Naive thymus-derived CD4-positive, alpha-beta T cell (primary cell): ENCODE measurements at regions of chr4 and their contacts with region 1.

Region 1: DNA sequence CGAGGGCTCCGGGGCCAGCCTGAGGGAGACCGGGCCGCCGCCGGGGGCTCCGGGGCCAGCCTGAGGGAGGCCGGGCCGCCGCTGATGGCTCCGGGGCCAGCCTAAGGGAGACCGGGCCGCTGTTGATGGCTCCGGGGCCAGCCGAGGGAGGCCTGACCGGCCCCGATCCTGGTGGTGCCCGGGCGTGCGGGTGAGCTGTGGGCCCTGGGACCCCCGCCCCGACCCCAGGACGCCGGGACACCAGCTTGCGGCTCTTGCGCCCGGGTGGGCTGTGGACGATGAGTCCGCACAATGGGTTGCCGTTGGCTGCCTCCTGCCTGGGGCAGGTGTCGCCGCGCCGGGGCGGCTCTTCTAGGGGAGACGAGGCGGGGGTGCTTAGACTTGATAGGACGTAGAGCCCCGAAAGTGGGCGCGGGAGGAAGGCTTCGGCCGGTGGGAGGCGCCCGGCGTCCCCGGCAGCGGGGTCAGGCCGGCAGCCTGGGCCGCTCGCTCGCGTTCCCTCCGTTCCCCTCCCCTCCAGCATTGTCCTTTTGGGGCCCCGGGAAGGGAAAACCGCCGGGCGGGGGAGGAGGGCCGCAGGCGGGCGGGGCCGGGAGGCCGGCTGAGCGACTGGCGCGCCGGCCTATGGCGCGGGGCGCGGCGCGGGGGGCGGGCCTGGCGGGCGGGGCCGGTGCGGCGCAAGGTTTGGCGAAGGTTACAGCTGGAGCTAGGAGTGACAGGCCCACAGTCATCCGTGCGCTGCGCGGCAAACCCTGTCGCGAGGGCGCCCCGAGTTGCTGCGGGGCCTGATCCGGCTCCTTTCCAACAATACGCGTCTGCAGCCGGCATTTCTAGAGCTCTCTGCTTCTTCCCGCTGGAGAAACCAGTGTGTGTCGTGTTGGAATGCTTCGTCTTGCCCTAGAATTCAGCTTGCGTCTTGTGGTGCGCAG is 790 bp downstream of the KIAA0232 start:
- DNase-seq: peak; percentile 80 to 92 (median 87)
- ATAC-seq: peak; percentile 85
- H3K4me3 ChIP-seq: peak overlapping the region; percentile 85
- H3K4me3 Mint-ChIP-seq: peak overlapping the region; percentile 82 to 88 (median 86)
- H3K27ac ChIP-seq: peak overlapping the region; percentile 97
- H3K27ac Mint-ChIP-seq: peak overlapping the region; percentile 64 to 93 (median 84)
- H3K4me1 ChIP-seq: peaks cover 20 to 21% of the 10 kb centered on the region in 2 donors
- H3K4me1 Mint-ChIP-seq: peaks cover 39 to 75% (median 68%) of the 10 kb centered on the region in 7 donors
- H3K27me3 ChIP-seq: no peaks in the 10 kb centered on the region
- H3K27me3 Mint-ChIP-seq: no peaks in the 10 kb centered on the region

Region 2: GRCh38 chr4:6269616-6270511 is 513.5 kb before region 1 on chr4 and contains the start of gene WFS1:
- CTCF ChIA-PET with region 1: no interaction called
- POLR2A ChIA-PET with region 1: no interaction called
- intact Hi-C with region 1: loop called in 1 of 2 experiments (anchors 2 kb)
- DNase-seq: peak; percentile 91 to 97 (median 95)
- ATAC-seq: peak; percentile 100
- H3K4me3 ChIP-seq: peak within 1 kb of the TSS; percentile 82
- H3K4me3 Mint-ChIP-seq: peak within 1 kb of the TSS; percentile 85 to 92 (median 90)
- H3K27ac ChIP-seq: peak within 1 kb of the TSS; percentile 67
- H3K27ac Mint-ChIP-seq: peak within 1 kb of the TSS; percentile 24 to 84 (median 65)
- H3K4me1 ChIP-seq: peaks cover 8% of the 10 kb centered on the region in 2 donors
- H3K4me1 Mint-ChIP-seq: peaks cover 19 to 31% (median 25%) of the 10 kb centered on the region in 7 donors
- H3K27me3 ChIP-seq: no peaks in the 10 kb centered on the region
- H3K27me3 Mint-ChIP-seq: peaks cover 0 to 44% (median 3%) of the 10 kb centered on the region in 5 donors
- total RNA-seq, gene WFS1: 2.8 to 6.7 (median 4.4) TPM

Region 3: DNA sequence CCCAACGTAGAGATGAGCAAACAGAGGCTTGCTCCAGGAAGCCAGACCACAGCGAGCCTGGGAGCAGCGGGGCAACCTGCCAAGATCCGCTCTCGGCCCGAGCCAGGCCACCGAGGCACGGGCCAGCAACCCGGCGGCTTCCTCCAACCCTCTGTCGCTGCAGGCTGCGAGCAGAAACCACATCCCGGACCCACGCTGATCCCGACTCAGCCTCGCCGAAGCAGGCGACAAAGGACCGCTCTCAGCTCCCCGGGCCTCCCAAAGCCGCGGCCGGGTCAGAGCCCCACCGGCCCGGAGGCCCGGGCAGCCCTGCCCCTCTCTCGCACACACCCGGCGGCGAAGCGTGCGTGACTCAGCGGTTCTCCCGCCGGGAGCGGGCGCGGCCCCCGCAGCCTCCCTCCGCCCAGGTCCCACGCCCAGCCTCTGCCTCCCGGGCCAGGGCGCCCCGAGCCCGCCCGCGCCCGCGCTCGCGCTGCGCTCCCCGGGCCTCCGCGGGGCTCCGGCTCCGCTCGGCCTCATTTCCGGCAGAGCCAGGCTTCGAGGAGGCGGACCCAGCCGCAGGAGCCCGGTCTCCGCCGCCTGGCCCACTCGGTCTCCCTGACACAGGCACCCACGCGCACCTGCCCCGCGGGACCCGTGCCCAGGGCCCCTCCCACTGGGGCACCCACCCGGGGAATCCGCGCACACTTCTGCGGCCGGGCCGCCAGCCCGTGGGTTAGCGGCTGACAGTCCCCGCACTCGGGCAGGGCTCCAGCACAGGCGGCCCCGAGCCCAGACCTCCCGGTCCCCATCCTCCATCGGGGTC is 312.6 kb before region 1 on chr4:
- CTCF ChIA-PET with region 1: no interaction called
- POLR2A ChIA-PET with region 1: no interaction called
- intact Hi-C with region 1: no loop called
- DNase-seq: no peak
- ATAC-seq: no peak
- H3K4me3 ChIP-seq: no peak overlapping the region
- H3K4me3 Mint-ChIP-seq: peak overlapping the region in 8 of 10 donors; percentile 21 to 75 (median 52)
- H3K27ac ChIP-seq: no peak overlapping the region
- H3K27ac Mint-ChIP-seq: no peak overlapping the region
- H3K4me1 ChIP-seq: no peaks in the 10 kb centered on the region
- H3K4me1 Mint-ChIP-seq: peaks cover 0 to 9% (median 5%) of the 10 kb centered on the region in 7 donors
- H3K27me3 ChIP-seq: no peaks in the 10 kb centered on the region
- H3K27me3 Mint-ChIP-seq: peaks cover 48 to 71% (median 68%) of the 10 kb centered on the region in 5 donors

Region 4: GRCh38 chr4:6709230-6710114 is 73.8 kb before region 1 on chr4 and contains the start of gene MRFAP1L1:
- CTCF ChIA-PET with region 1: no interaction called
- POLR2A ChIA-PET with region 1: interaction called, 5 read pairs
- intact Hi-C with region 1: loop called (anchors 1 kb)
- DNase-seq: peak; percentile 91 to 98 (median 97)
- ATAC-seq: peak; percentile 99
- H3K4me3 ChIP-seq: peak within 1 kb of the TSS; percentile 93
- H3K4me3 Mint-ChIP-seq: peak within 1 kb of the TSS; percentile 96 to 100 (median 98)
- H3K27ac ChIP-seq: peak within 1 kb of the TSS; percentile 86
- H3K27ac Mint-ChIP-seq: peak within 1 kb of the TSS; percentile 95 to 99 (median 98)
- H3K4me1 ChIP-seq: peaks cover 38 to 48% of the 10 kb centered on the region in 2 donors
- H3K4me1 Mint-ChIP-seq: peaks cover 45 to 71% (median 65%) of the 10 kb centered on the region in 7 donors
- H3K27me3 ChIP-seq: no peaks in the 10 kb centered on the region
- H3K27me3 Mint-ChIP-seq: peaks cover 0 to 8% (median 0%) of the 10 kb centered on the region in 5 donors
- total RNA-seq, gene MRFAP1L1: 24.8 to 124 (median 73.6) TPM

Region 5: GRCh38 chr4:6873792-6874461 is 90.6 kb after region 1 on chr4:
- CTCF ChIA-PET with region 1: interaction called, 15 read pairs
- POLR2A ChIA-PET with region 1: interaction called, 6 read pairs
- intact Hi-C with region 1: loop called (anchors 1 to 2 kb)
- DNase-seq: peak; percentile 62 to 80 (median 73)
- ATAC-seq: peak; percentile 81
- H3K4me3 ChIP-seq: no peak overlapping the region
- H3K4me3 Mint-ChIP-seq: no peak overlapping the region
- H3K27ac ChIP-seq: no peak overlapping the region
- H3K27ac Mint-ChIP-seq: peak overlapping the region in 3 of 9 donors; percentile 53 to 59 (median 54)
- H3K4me1 ChIP-seq: no peaks in the 10 kb centered on the region
- H3K4me1 Mint-ChIP-seq: peaks cover 0 to 20% (median 6%) of the 10 kb centered on the region in 7 donors
- H3K27me3 ChIP-seq: no peaks in the 10 kb centered on the region
- H3K27me3 Mint-ChIP-seq: no peaks in the 10 kb centered on the region

Region 6: GRCh38 chr4:7042697-7043464 is 259.6 kb after region 1 on chr4 and contains the start of gene TADA2B:
- CTCF ChIA-PET with region 1: no interaction called
- POLR2A ChIA-PET with region 1: interaction called, 4 read pairs
- intact Hi-C with region 1: loop called in 1 of 2 experiments (anchors 1 kb)
- DNase-seq: peak; percentile 79 to 99 (median 88)
- ATAC-seq: peak; percentile 89
- H3K4me3 ChIP-seq: peak within 1 kb of the TSS; percentile 84
- H3K4me3 Mint-ChIP-seq: peak within 1 kb of the TSS; percentile 90 to 95 (median 92)
- H3K27ac ChIP-seq: peak within 1 kb of the TSS; percentile 85
- H3K27ac Mint-ChIP-seq: peak within 1 kb of the TSS; percentile 80 to 92 (median 89)
- H3K4me1 ChIP-seq: peaks cover 33 to 40% of the 10 kb centered on the region in 2 donors
- H3K4me1 Mint-ChIP-seq: peaks cover 38 to 58% (median 52%) of the 10 kb centered on the region in 7 donors
- H3K27me3 ChIP-seq: no peaks in the 10 kb centered on the region
- H3K27me3 Mint-ChIP-seq: peaks cover 0 to 15% (median 0%) of the 10 kb centered on the region in 5 donors
- total RNA-seq, gene TADA2B: 26.8 to 49.0 (median 41.5) TPM

Region 7: GRCh38 chr4:8158710-8159536 is 1375.6 kb after region 1 on chr4 and contains the start of gene ABLIM2:
- CTCF ChIA-PET with region 1: no interaction called
- POLR2A ChIA-PET with region 1: no interaction called
- intact Hi-C with region 1: loop called (anchors 2 to 5 kb)
- DNase-seq: peak; percentile 96 to 100 (median 100)
- ATAC-seq: peak; percentile 100
- H3K4me3 ChIP-seq: peak within 1 kb of the TSS; percentile 95
- H3K4me3 Mint-ChIP-seq: peak within 1 kb of the TSS; percentile 92 to 100 (median 97)
- H3K27ac ChIP-seq: peak within 1 kb of the TSS; percentile 77
- H3K27ac Mint-ChIP-seq: peak within 1 kb of the TSS; percentile 84 to 96 (median 91)
- H3K4me1 ChIP-seq: peaks cover 10 to 13% of the 10 kb centered on the region in 2 donors
- H3K4me1 Mint-ChIP-seq: peaks cover 7 to 25% (median 18%) of the 10 kb centered on the region in 7 donors
- H3K27me3 ChIP-seq: no peaks in the 10 kb centered on the region
- H3K27me3 Mint-ChIP-seq: peaks cover 0 to 31% (median 4%) of the 10 kb centered on the region in 5 donors
- total RNA-seq, gene ABLIM2: 0.22 to 4.9 (median 3.1) TPM